ENCODE measurements at regions of chr3 and their contacts with region 1.

Region 1: DNA sequence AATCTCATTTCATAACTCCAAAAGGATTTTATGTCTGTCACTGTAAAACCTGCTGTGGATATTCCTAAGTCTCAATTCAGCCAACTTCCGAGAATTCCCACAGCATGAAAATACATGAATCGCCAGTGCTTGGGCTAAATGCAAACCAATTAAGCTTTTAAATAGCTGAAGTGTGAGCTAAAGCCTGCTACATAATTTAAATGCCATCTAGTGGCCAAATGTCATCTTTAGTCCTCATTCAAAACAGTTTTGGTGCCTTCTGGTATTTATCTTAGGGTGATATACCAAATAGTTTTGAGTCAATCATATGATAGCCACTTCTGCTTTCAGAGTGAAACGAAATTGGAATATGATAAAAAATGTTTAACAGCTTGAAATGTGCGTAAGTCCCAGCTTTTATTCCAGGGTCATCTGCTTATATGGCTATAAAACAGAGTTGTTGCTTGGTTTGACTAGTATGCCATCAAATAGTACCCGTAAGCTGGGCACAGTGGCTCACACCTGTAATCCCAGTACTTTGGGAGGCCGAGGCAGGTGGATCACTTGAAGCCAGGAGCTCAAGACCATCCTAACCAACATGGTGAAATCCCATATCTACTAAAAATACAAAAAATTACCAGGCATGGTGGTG is 41.8 kb upstream of the CCNL1 start:
- DNase-seq: peak in 1 of 35 experiments; percentile 52
- ATAC-seq: peak in 2 of 4 experiments; percentile 53 to 56
- H3K4me3 ChIP-seq: no peak overlapping the region
- H3K4me3 Mint-ChIP-seq: no peak overlapping the region
- H3K27ac ChIP-seq: no peak overlapping the region
- H3K27ac Mint-ChIP-seq: no peak overlapping the region
- H3K4me1 ChIP-seq: no peaks in the 10 kb centered on the region
- H3K4me1 Mint-ChIP-seq: peaks cover 0 to 3% (median 0%) of the 10 kb centered on the region in 3 donors
- H3K27me3 ChIP-seq: no peaks in the 10 kb centered on the region
- H3K27me3 Mint-ChIP-seq: no peaks in the 10 kb centered on the region

Region 2: DNA sequence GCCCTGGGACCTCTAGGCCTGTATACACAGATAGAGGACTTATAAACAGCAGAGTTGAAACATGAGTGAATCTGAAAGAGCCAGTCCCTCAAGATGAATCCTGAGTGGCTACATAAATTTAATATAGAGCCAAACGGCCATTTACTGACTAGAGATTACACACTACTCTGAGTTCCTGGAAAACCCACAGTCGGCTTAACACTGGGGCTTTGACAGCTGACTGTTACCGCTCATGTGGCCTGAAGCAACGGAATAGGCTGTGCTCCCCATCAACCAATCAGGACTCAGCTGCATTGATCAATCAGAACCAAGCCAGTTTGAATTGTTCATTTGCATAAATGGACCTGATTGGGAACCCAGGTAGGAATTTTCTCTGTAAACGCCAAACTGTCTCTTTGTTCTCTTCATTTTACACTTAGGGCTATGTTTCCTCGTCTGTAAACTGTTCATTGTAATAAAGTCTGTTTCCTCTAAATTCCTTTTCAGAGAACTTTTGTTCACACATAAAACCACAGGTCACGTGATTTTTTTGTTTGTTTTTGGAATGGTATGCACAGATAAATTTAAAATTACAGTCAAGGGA is 82.3 kb before region 1 on chr3:
- CTCF ChIA-PET with region 1: interaction called in 1 of 2 experiments, 14 read pairs
- POLR2A ChIA-PET with region 1: no interaction called
- DNase-seq: peak in 8 of 35 experiments; percentile 7 to 55 (median 17)
- ATAC-seq: peak in 3 of 4 experiments; percentile 41 to 90 (median 84)
- H3K4me3 ChIP-seq: no peak overlapping the region
- H3K4me3 Mint-ChIP-seq: peak overlapping the region in 1 of 3 donors; percentile 15
- H3K27ac ChIP-seq: no peak overlapping the region
- H3K27ac Mint-ChIP-seq: peak overlapping the region in 1 of 2 donors; percentile 33
- H3K4me1 ChIP-seq: peaks cover 0 to 7% of the 10 kb centered on the region in 2 experiments
- H3K4me1 Mint-ChIP-seq: peaks cover 9 to 11% (median 9%) of the 10 kb centered on the region in 3 donors
- H3K27me3 ChIP-seq: no peaks in the 10 kb centered on the region
- H3K27me3 Mint-ChIP-seq: no peaks in the 10 kb centered on the region

Region 3: GRCh38 chr3:157233923-157234322 is 32.2 kb after region 1 on chr3:
- CTCF ChIA-PET with region 1: interaction called in 1 of 2 experiments, 12 read pairs
- POLR2A ChIA-PET with region 1: interaction called in 1 of 2 experiments, 5 read pairs
- DNase-seq: no peak
- ATAC-seq: no peak
- H3K4me3 ChIP-seq: no peak overlapping the region
- H3K4me3 Mint-ChIP-seq: no peak overlapping the region
- H3K27ac ChIP-seq: no peak overlapping the region
- H3K27ac Mint-ChIP-seq: no peak overlapping the region
- H3K4me1 ChIP-seq: no peaks in the 10 kb centered on the region
- H3K4me1 Mint-ChIP-seq: peaks cover 0 to under 1% (median under 1%) of the 10 kb centered on the region in 3 donors
- H3K27me3 ChIP-seq: no peaks in the 10 kb centered on the region
- H3K27me3 Mint-ChIP-seq: no peaks in the 10 kb centered on the region